ENCODE measurements at regions of chr12 and their contacts with region 1.

Region 1: GRCh38 chr12:85476756-85477155 is 196.7 kb downstream of the ALX1 start:
- DNase-seq: no peak
- ATAC-seq: no peak
- H3K4me3 ChIP-seq: no peak overlapping the region
- H3K27ac ChIP-seq: no peak overlapping the region
- H3K4me1 ChIP-seq: no peaks in the 10 kb centered on the region
- H3K27me3 ChIP-seq: no peaks in the 10 kb centered on the region
- CTCF ChIP-seq: no peak

Region 2: DNA sequence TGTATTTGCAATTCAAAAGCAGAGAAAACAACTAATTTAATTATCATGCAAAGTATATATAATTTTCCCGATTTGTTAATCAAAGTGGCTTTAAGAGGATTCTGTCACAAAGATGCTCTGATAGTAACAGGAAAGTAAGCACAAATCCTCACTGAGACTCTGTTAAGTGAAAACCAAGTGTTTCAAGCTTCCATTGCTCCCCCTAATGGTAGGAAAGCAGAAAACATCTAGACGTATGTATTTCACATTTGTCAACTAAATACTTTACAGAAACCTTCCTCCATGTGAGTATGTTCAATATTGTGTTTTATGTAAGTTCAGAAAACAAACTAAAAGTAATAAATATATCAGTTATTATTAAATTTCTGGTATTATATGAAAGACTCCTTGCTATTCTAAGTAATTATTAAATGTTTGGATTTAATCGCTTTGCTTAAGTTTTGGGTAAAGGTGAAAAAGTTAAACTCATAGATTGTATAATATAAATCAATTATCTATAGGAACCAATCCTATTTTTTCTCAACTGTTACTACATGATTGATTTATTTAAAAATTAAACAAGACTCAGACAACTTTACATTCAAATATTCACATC is 395.8 kb after region 1 on chr12:
- intact Hi-C with region 1: loop called (anchors 10 kb)
- DNase-seq: no peak
- ATAC-seq: peak in 1 of 2 donors; percentile 66
- H3K4me3 ChIP-seq: no peak overlapping the region
- H3K27ac ChIP-seq: no peak overlapping the region
- H3K4me1 ChIP-seq: no peaks in the 10 kb centered on the region
- H3K27me3 ChIP-seq: no peaks in the 10 kb centered on the region
- CTCF ChIP-seq: peak; percentile 70

Measured in lower lobe of right lung (tissue), 2 donors.